ENCODE measurements at regions of chr17 and their contacts with region 1.

Region 1: DNA sequence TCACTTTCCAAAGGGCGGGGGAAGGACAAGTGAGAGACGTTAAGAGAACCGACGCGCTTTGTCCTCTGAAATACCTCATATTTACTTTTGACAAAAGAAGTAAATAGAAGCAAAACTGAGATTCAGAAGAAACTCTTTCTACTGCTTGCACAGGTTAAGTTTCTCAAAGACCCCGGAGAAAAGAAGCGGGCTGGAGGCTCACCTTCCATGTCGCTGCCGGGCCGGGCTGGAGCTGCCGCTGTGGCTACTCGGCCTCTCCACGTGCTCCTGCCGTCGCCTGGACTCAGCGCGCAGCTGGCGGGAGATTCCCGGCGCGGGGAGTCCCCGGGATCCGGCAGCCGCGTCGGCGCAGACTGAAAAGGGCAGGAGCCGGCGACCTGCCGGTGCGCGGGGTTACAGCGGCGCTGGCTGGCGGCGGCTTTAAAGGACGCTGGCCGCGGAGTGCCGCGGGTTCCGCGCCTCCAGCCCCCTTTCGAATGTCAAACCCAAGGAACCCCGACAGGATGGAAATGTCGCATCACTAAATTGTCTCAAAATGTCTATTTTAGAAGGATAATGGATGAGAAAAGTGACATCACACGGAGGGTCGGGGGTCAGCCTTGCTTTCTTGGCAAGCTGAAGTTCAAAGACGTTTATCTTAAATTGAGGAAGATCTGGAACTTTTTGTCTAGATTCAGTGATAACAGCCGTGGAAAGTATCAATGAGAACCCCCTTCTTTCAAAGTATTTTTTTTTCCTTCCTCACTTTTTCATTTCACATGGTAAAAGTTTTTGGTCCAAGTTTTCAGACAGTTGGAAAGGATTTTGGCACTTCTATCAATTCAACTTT is at the start of gene IKZF3:
- DNase-seq: peak; percentile 100
- H3K4me3 Mint-ChIP-seq: peak within 1 kb of the TSS; percentile 67
- H3K27ac Mint-ChIP-seq: peak within 1 kb of the TSS; percentile 31
- H3K4me1 Mint-ChIP-seq: peaks cover 38% of the 10 kb centered on the region
- H3K27me3 Mint-ChIP-seq: peaks cover 53% of the 10 kb centered on the region
- CTCF ChIP-seq: no peak
- total RNA-seq, gene IKZF3: 30.9 and 41.0 TPM in 2 replicates

Region 2: DNA sequence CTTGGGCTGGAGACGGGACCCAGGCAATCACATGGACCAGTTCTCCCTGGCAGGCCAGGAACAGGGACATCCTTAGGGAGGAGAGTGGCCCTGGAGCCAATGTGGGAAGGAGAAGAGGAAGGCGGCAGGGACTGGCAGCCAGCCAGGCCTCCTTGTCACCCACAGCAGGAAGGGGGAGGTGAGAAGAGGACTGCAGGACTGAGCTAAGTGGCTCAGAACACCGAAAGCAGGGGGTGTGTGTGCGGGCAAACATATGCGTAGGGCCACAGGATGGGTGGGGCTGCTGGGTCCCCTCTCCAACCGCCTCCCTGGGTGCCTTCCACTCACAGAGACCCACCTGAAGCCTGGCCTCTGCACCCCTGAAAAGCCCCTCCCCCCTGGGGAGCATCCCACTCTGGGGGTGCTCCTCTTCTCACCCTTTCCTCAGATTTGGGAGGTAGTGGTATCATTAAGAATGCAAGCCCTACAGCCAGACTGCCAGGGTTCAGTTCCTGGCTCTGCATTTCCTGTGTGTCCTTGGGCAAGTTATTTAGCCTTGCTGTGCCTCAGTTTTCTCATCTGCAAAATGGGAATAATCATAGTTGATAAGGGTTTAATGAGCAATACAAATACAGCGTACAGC is 187.8 kb before region 1 on chr17:
- CTCF ChIA-PET with region 1: interaction called, 119 read pairs
- intact Hi-C with region 1: no loop called
- DNase-seq: peak; percentile 100
- H3K4me3 Mint-ChIP-seq: peak overlapping the region; percentile 3
- H3K27ac Mint-ChIP-seq: peak overlapping the region; percentile 62
- H3K4me1 Mint-ChIP-seq: peaks cover 91% of the 10 kb centered on the region
- H3K27me3 Mint-ChIP-seq: peaks cover 6% of the 10 kb centered on the region
- CTCF ChIP-seq: no peak

Region 3: GRCh38 chr17:39730095-39730921 is 133.8 kb before region 1 on chr17 and contains the start of gene MIEN1:
- CTCF ChIA-PET with region 1: interaction called, 217 read pairs
- intact Hi-C with region 1: loop called (anchors 1 kb)
- DNase-seq: no peak
- H3K4me3 Mint-ChIP-seq: peak within 1 kb of the TSS; percentile 79
- H3K27ac Mint-ChIP-seq: peak within 1 kb of the TSS; percentile 90
- H3K4me1 Mint-ChIP-seq: peaks cover 34% of the 10 kb centered on the region
- H3K27me3 Mint-ChIP-seq: no peaks in the 10 kb centered on the region
- CTCF ChIP-seq: no peak
- total RNA-seq, gene MIEN1: 2,121 and 2,217 TPM in 2 replicates

Region 4: GRCh38 chr17:39794249-39794970 is 69.7 kb before region 1 on chr17:
- CTCF ChIA-PET with region 1: interaction called, 83 read pairs
- intact Hi-C with region 1: no loop called
- DNase-seq: peak; percentile 73
- H3K4me3 Mint-ChIP-seq: no peak overlapping the region
- H3K27ac Mint-ChIP-seq: no peak overlapping the region
- H3K4me1 Mint-ChIP-seq: no peaks in the 10 kb centered on the region
- H3K27me3 Mint-ChIP-seq: no peaks in the 10 kb centered on the region
- CTCF ChIP-seq: no peak

Region 5: DNA sequence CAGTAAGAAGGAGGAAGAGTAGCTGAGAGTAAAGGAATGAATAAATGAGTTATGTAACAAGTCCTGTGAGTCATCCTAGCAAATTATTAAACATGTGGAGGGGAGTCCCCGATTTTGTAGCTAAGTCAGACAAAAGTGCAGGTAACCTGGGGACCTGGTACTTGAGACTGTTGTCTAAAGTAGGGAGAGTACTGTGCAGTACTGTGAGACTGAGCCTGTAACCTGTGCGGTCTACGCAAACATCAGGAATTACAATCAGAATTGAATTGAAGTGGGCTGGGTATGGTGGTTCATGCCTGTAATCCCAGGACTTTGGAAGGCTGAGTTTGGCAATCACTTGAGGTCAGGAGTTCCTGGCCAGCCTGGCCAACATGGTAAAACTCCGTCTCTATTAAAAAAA is 35.7 kb before region 1 on chr17:
- CTCF ChIA-PET with region 1: interaction called, 258 read pairs
- intact Hi-C with region 1: loop called (anchors 1 kb)
- DNase-seq: peak; percentile 100
- H3K4me3 Mint-ChIP-seq: peak overlapping the region; percentile 36
- H3K27ac Mint-ChIP-seq: peak overlapping the region; percentile 48
- H3K4me1 Mint-ChIP-seq: peaks cover 17% of the 10 kb centered on the region
- H3K27me3 Mint-ChIP-seq: no peaks in the 10 kb centered on the region
- CTCF ChIP-seq: no peak

Region 6: GRCh38 chr17:39916918-39917317 is 52.8 kb after region 1 on chr17:
- CTCF ChIA-PET with region 1: interaction called, 1,000 read pairs
- intact Hi-C with region 1: no loop called
- DNase-seq: peak; percentile 94
- H3K4me3 Mint-ChIP-seq: no peak overlapping the region
- H3K27ac Mint-ChIP-seq: no peak overlapping the region
- H3K4me1 Mint-ChIP-seq: peaks cover 24% of the 10 kb centered on the region
- H3K27me3 Mint-ChIP-seq: no peaks in the 10 kb centered on the region
- CTCF ChIP-seq: no peak

Region 7: DNA sequence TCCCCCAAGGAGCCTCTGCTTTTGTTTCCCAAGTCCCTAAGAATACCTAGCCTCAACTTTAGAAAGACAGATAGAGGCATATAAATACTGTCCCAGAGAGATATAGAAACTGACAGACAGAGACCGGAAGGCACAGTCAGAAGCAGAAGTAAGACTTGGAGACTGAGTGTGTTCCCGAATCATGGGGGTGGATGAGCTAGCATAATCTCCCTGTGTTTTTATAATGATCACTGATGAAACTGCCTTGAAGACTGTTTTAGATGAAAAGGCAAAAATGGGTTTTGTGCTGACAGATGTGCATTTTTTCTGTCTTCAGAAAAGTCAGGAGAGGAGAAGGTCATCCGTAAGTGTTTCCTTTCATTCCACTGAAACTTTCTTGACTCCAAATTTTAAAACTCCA is 108.1 kb after region 1 on chr17:
- CTCF ChIA-PET with region 1: interaction called, 11 read pairs
- intact Hi-C with region 1: no loop called
- DNase-seq: no peak
- H3K4me3 Mint-ChIP-seq: no peak overlapping the region
- H3K27ac Mint-ChIP-seq: no peak overlapping the region
- H3K4me1 Mint-ChIP-seq: peaks cover 17% of the 10 kb centered on the region
- H3K27me3 Mint-ChIP-seq: peaks cover 84% of the 10 kb centered on the region
- CTCF ChIP-seq: no peak

Region 8: GRCh38 chr17:40032322-40033320 is 168.5 kb after region 1 on chr17:
- CTCF ChIA-PET with region 1: no interaction called
- intact Hi-C with region 1: no loop called
- DNase-seq: peak; percentile 51
- H3K4me3 Mint-ChIP-seq: no peak overlapping the region
- H3K27ac Mint-ChIP-seq: no peak overlapping the region
- H3K4me1 Mint-ChIP-seq: peaks cover 8% of the 10 kb centered on the region
- H3K27me3 Mint-ChIP-seq: no peaks in the 10 kb centered on the region
- CTCF ChIP-seq: no peak

Region 9: GRCh38 chr17:40139566-40140058 is 275.5 kb after region 1 on chr17:
- CTCF ChIA-PET with region 1: no interaction called
- intact Hi-C with region 1: no loop called
- DNase-seq: peak; percentile 72
- H3K4me3 Mint-ChIP-seq: peak overlapping the region; percentile 98
- H3K27ac Mint-ChIP-seq: peak overlapping the region; percentile 98
- H3K4me1 Mint-ChIP-seq: peaks cover 45% of the 10 kb centered on the region
- H3K27me3 Mint-ChIP-seq: no peaks in the 10 kb centered on the region
- CTCF ChIP-seq: no peak

Region 10: DNA sequence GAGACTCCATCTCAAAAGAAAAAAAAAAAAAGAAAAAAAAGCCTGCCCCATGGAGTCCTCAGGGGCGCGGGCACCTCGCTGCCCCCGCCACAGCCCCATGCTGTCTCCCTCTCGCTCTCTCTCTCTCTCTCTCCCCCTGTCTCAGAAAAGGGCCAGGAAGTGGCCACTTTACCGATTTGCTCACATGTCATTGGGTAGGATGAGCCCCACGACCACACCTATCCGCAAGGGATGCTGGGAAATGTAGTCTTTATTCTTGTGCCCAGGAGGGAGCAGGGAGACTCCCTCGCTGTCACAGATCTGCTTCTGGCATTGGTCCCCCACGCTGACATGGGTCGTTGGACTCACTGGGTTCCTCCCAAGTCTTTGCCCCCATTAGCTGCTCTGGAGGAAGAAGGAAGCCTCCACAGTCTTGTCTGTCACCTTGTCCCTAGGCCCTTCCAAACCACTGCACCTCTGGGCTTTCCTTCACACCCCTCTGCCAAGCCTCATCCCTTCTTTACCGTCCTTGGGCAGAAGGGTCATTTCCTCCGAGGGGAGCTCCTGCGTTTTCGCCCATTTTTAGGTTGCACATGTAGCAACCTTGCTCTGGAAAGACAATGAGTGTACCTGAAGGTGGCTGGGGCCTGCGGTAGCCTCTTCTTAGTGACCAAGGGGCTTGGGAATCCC is 507.3 kb after region 1 on chr17:
- CTCF ChIA-PET with region 1: no interaction called
- intact Hi-C with region 1: no loop called
- DNase-seq: no peak
- H3K4me3 Mint-ChIP-seq: no peak overlapping the region
- H3K27ac Mint-ChIP-seq: no peak overlapping the region
- H3K4me1 Mint-ChIP-seq: peaks cover 25% of the 10 kb centered on the region
- H3K27me3 Mint-ChIP-seq: no peaks in the 10 kb centered on the region
- CTCF ChIP-seq: no peak